Caco-2 (cell line): ENCODE measurements at regions of chr3 and their contacts with region 1.

Region 1: GRCh38 chr3:148955544-148956346 is 35.6 kb upstream of the GYG1 start:
- DNase-seq: peak; percentile 41 to 59
- H3K4me3 ChIP-seq: no peak overlapping the region
- H3K4me3 Mint-ChIP-seq: no peak overlapping the region
- H3K27ac Mint-ChIP-seq: no peak overlapping the region
- H3K4me1 ChIP-seq: peaks cover 4% of the 10 kb centered on the region; the same call in 1 of the 2 replicates
- H3K4me1 Mint-ChIP-seq: no peaks in the 10 kb centered on the region
- H3K27me3 ChIP-seq: no peaks in the 10 kb centered on the region; the same call in 1 of the 2 replicates
- H3K27me3 Mint-ChIP-seq: peaks cover 4% of the 10 kb centered on the region
- CTCF ChIP-seq: peak; percentile 29 to 77

Region 2: DNA sequence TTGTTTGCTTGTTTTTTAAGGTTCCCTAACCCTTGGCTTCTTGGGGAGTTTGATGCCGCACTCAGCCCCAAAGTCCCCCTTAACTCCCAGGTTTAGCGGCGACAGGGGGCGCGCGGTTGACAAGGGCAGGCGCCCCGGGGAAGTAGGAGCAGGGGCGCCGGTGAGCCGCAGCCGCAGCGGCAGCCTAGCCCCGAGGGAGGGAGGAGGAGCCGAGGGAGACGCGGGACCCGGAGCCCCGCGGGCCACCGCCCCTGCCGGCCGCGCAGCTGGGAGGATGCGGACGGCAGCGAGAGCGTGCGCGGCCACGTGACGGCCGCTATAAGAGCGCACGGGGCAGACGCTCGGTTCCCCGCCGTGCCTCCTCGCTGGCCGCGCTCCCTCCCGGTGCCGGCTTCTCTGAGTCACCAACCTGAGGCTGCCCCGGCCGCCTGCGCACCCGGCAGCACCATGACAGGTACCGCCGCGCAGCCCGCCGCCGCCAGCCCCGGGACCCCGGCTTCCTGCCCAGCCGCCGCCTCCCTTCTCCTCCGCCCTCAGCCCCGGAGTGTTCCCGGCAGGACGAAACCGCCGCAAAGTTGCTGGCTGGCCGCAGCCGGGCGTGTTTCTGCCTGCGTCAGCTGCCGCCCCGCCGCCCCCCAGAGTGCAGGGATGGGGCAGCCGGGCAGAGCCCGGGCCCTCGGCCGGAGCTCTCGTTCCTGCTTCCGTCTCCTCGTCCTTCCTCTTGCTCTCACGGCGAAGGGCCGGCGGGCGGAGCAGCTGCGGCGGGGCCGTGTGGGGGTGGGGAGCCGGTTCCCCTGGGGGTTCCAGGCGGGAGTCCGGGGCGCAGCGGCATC is 35.7 kb after region 1 on chr3 and contains the start of gene GYG1:
- CTCF ChIA-PET with region 1: interaction called, 14 read pairs
- POLR2A ChIA-PET with region 1: no interaction called
- intact Hi-C with region 1: loop called (anchors 1 kb)
- DNase-seq: peak; percentile 75 to 83
- H3K4me3 ChIP-seq: peak within 1 kb of the TSS; percentile 88
- H3K4me3 Mint-ChIP-seq: peak within 1 kb of the TSS; percentile 75
- H3K27ac Mint-ChIP-seq: peak within 1 kb of the TSS; percentile 45
- H3K4me1 ChIP-seq: peaks cover 7% of the 10 kb centered on the region; the same call in 1 of the 2 replicates
- H3K4me1 Mint-ChIP-seq: no peaks in the 10 kb centered on the region
- H3K27me3 ChIP-seq: no peaks in the 10 kb centered on the region
- H3K27me3 Mint-ChIP-seq: no peaks in the 10 kb centered on the region
- CTCF ChIP-seq: peak; percentile 29 to 48
- total RNA-seq, gene GYG1: 28.0 and 29.2 TPM in 2 replicates

Region 3: GRCh38 chr3:149042789-149043386 is 87.1 kb after region 1 on chr3:
- CTCF ChIA-PET with region 1: interaction called, 16 read pairs
- POLR2A ChIA-PET with region 1: no interaction called
- intact Hi-C with region 1: no loop called
- DNase-seq: no peak
- H3K4me3 ChIP-seq: no peak overlapping the region
- H3K4me3 Mint-ChIP-seq: no peak overlapping the region
- H3K27ac Mint-ChIP-seq: no peak overlapping the region
- H3K4me1 ChIP-seq: no peaks in the 10 kb centered on the region
- H3K4me1 Mint-ChIP-seq: no peaks in the 10 kb centered on the region
- H3K27me3 ChIP-seq: no peaks in the 10 kb centered on the region
- H3K27me3 Mint-ChIP-seq: no peaks in the 10 kb centered on the region
- CTCF ChIP-seq: no peak

Region 4: GRCh38 chr3:149234671-149235245 is 279.0 kb after region 1 on chr3:
- CTCF ChIA-PET with region 1: no interaction called
- POLR2A ChIA-PET with region 1: no interaction called
- intact Hi-C with region 1: no loop called
- DNase-seq: no peak
- H3K4me3 ChIP-seq: no peak overlapping the region
- H3K4me3 Mint-ChIP-seq: no peak overlapping the region
- H3K27ac Mint-ChIP-seq: no peak overlapping the region
- H3K4me1 ChIP-seq: peaks cover 23% of the 10 kb centered on the region
- H3K4me1 Mint-ChIP-seq: peaks cover 11% of the 10 kb centered on the region
- H3K27me3 ChIP-seq: no peaks in the 10 kb centered on the region
- H3K27me3 Mint-ChIP-seq: no peaks in the 10 kb centered on the region
- CTCF ChIP-seq: no peak

Region 5: GRCh38 chr3:149245738-149246451 is 290.1 kb after region 1 on chr3:
- CTCF ChIA-PET with region 1: interaction called, 10 read pairs
- POLR2A ChIA-PET with region 1: no interaction called
- intact Hi-C with region 1: no loop called
- DNase-seq: peak in 1 of 2 experiments; percentile 62
- H3K4me3 ChIP-seq: no peak overlapping the region
- H3K4me3 Mint-ChIP-seq: peak overlapping the region; percentile 12
- H3K27ac Mint-ChIP-seq: no peak overlapping the region
- H3K4me1 ChIP-seq: peaks cover 29% of the 10 kb centered on the region
- H3K4me1 Mint-ChIP-seq: peaks cover 11% of the 10 kb centered on the region
- H3K27me3 ChIP-seq: no peaks in the 10 kb centered on the region
- H3K27me3 Mint-ChIP-seq: no peaks in the 10 kb centered on the region
- CTCF ChIP-seq: no peak

Region 6: GRCh38 chr3:149299938-149300791 is 344.4 kb after region 1 on chr3:
- CTCF ChIA-PET with region 1: interaction called, 10 read pairs
- POLR2A ChIA-PET with region 1: no interaction called
- intact Hi-C with region 1: no loop called
- DNase-seq: peak; percentile 81 to 88
- H3K4me3 ChIP-seq: no peak overlapping the region
- H3K4me3 Mint-ChIP-seq: peak overlapping the region; percentile 49
- H3K27ac Mint-ChIP-seq: peak overlapping the region; percentile 61
- H3K4me1 ChIP-seq: peaks cover 35% of the 10 kb centered on the region
- H3K4me1 Mint-ChIP-seq: peaks cover 16% of the 10 kb centered on the region
- H3K27me3 ChIP-seq: no peaks in the 10 kb centered on the region
- H3K27me3 Mint-ChIP-seq: no peaks in the 10 kb centered on the region
- CTCF ChIP-seq: no peak

Region 7: DNA sequence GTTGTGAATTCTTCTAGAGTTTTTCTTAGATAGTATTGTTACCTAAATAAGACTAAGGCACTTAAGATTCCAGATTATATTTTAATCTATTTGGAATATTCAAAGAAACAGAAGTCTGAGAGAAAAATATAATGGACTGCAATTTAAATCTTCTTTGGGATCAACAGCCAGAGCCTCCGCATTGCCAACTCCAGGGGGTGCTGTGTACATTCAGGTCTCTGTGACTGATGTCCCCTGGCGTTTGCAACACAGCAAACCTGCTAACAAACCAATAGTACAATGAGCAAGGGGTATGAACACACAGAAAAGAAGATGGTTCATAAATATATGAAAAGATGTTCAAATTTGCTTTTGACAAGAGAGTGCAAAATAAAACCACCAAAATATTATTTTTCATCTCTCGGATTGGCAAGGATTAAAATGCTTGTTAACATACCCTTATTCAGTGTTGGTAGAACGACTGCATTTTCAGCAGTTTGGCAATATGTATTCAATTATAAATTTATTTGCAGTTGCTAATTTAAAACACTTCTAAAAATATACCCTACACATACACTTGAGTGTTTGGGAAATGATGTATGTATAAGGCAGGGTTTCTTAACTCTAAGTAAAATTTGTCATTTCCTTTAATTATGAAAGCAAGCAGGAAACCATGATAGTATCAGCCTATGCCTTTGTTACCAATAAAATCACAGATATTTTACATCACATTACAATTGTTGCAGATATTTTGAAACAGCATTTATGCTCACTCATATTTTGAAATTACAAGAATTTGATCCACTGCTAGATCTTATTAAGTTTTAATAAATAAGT is 437.8 kb after region 1 on chr3:
- CTCF ChIA-PET with region 1: no interaction called
- POLR2A ChIA-PET with region 1: no interaction called
- intact Hi-C with region 1: loop called (anchors 10 kb)
- DNase-seq: peak; percentile 76 to 82
- H3K4me3 ChIP-seq: no peak overlapping the region
- H3K4me3 Mint-ChIP-seq: no peak overlapping the region
- H3K27ac Mint-ChIP-seq: no peak overlapping the region
- H3K4me1 ChIP-seq: peaks cover 17% of the 10 kb centered on the region
- H3K4me1 Mint-ChIP-seq: peaks cover 29% of the 10 kb centered on the region
- H3K27me3 ChIP-seq: no peaks in the 10 kb centered on the region
- H3K27me3 Mint-ChIP-seq: no peaks in the 10 kb centered on the region
- CTCF ChIP-seq: peak; percentile 90 to 97